ENCODE measurements at regions of chr13 and their contacts with region 1.

Region 1: DNA sequence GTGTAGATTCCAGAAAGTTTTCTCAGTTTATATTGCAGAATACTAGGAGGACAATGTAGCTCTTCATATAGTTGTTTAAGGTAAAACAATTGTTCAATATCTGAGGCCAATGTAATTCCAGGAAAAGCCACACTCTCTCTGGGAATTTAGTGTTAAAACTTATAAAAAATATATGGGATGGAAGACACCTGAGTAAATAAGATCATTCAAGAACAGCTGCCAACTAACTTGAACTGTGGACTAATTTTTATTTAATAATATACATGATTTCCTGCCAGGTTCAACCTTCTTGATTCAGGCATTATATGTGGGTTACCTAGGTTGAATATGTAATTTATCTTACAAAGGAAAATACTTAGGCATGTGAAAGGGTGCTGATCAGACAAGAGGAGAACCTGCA is 841.1 kb upstream of the PRR20A start:
- DNase-seq: no peak
- H3K4me3 ChIP-seq: no peak overlapping the region
- H3K27ac ChIP-seq: no peak overlapping the region
- H3K4me1 ChIP-seq: no peaks in the 10 kb centered on the region
- H3K27me3 ChIP-seq: no peaks in the 10 kb centered on the region
- CTCF ChIP-seq: no peak
- POLR2A ChIP-seq: no peak

Region 2: DNA sequence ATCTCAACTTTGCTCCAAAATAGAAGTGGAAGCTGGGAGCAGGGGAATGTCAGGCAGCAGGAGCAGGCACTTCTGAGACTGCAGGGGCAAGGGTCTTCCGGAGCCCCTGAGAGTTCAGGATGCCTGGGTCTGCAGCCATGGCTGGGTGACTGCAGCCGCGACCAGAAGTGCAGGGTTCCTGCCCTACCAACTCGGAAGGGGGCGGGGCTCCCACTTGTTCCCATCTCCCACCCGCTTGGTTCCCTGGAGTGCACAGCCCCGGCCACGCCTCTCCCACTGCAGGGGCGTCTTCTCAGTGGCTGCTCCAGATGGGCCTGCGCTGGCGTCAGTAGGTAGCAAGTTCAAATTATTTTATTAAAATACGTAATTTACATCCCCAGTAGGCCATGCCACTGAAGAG is 1639.4 kb before region 1 on chr13:
- intact Hi-C with region 1: loop called (anchors 5 kb)
- DNase-seq: no peak
- H3K4me3 ChIP-seq: no peak overlapping the region
- H3K27ac ChIP-seq: no peak overlapping the region
- H3K4me1 ChIP-seq: no peaks in the 10 kb centered on the region
- H3K27me3 ChIP-seq: no peaks in the 10 kb centered on the region
- CTCF ChIP-seq: no peak
- POLR2A ChIP-seq: no peak

Region 3: GRCh38 chr13:55528434-55528833 is 771.2 kb before region 1 on chr13:
- intact Hi-C with region 1: no loop called
- DNase-seq: no peak
- H3K4me3 ChIP-seq: no peak overlapping the region
- H3K27ac ChIP-seq: no peak overlapping the region
- H3K4me1 ChIP-seq: no peaks in the 10 kb centered on the region
- H3K27me3 ChIP-seq: no peaks in the 10 kb centered on the region
- CTCF ChIP-seq: no peak
- POLR2A ChIP-seq: no peak

Region 4: GRCh38 chr13:57073983-57074382 is 774.3 kb after region 1 on chr13:
- intact Hi-C with region 1: no loop called
- DNase-seq: no peak
- H3K4me3 ChIP-seq: no peak overlapping the region
- H3K27ac ChIP-seq: no peak overlapping the region
- H3K4me1 ChIP-seq: no peaks in the 10 kb centered on the region
- H3K27me3 ChIP-seq: no peaks in the 10 kb centered on the region
- CTCF ChIP-seq: no peak
- POLR2A ChIP-seq: no peak

Region 5: GRCh38 chr13:57633141-57633949 is 1333.7 kb after region 1 on chr13:
- intact Hi-C with region 1: no loop called
- DNase-seq: peak in 1 of 2 donors; percentile 51
- H3K4me3 ChIP-seq: peak overlapping the region; percentile 48 to 69 (median 50)
- H3K27ac ChIP-seq: no peak overlapping the region
- H3K4me1 ChIP-seq: peaks cover 0 to 10% of the 10 kb centered on the region in 2 donors
- H3K27me3 ChIP-seq: peaks cover 0 to 67% of the 10 kb centered on the region in 2 donors
- CTCF ChIP-seq: no peak
- POLR2A ChIP-seq: no peak

Measured in breast epithelium (tissue), 4 donors.